Activated CD4-positive, alpha-beta memory T cell treated with anti-CD3 and anti-CD28 coated beads, Interleukin-2, amount 10 ng/mL, durations not matched to agents 7 days and 5 days (primary cell): ENCODE measurements at regions of chr2 and their contacts with region 1.

Region 1: DNA sequence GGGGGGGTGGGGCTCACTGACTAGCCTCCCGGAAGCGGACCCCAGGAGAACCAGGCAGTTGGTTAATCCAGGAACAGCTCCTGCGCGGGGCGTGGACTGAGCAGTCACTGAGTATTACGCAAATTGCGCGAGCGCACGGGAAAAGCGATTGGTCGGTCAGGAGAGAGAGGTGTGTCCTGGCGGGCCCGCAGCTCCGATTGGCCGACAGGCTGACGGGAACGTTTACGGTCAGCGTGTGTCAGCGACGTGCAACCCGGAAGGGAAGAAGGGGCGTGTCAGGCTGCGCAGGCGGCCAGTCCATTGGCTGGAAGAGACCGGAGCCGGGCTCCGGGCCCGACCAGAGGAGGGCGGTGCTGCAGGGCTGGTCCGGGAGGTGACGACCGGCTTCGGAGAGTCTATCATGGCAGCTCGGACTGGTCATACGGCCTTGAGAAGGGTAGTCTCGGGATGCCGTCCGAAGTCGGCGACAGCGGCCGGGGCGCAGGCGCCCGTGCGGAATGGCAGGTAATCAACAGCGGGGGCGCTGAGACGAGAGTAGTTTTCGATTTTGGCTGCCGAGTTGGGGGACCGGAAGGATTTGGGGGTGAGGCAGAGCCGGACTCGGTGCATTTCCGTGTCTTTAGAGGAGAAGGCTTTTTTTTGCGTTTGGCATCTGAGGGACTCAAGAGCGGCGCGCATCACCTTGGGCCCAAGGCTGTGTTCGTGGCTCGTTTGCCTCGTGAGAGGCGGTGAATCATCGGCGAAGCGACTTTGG is at the start of gene COQ10B:
- DNase-seq: peak; percentile 99
- H3K4me3 Mint-ChIP-seq: peak within 1 kb of the TSS; percentile 96
- H3K27ac Mint-ChIP-seq: peak within 1 kb of the TSS; percentile 99
- H3K4me1 Mint-ChIP-seq: peaks cover 40% of the 10 kb centered on the region
- H3K27me3 Mint-ChIP-seq: no peaks in the 10 kb centered on the region
- total RNA-seq, gene COQ10B: 22.2 to 24.4 TPM

Region 2: GRCh38 chr2:197383823-197384222 is 69.5 kb before region 1 on chr2:
- CTCF ChIA-PET with region 1: no interaction called
- POLR2A ChIA-PET with region 1: no interaction called
- DNase-seq: no peak
- H3K4me3 Mint-ChIP-seq: no peak overlapping the region
- H3K27ac Mint-ChIP-seq: no peak overlapping the region
- H3K4me1 Mint-ChIP-seq: peaks cover 23% of the 10 kb centered on the region
- H3K27me3 Mint-ChIP-seq: peaks cover 5% of the 10 kb centered on the region

Region 3: GRCh38 chr2:197434541-197435513 is 18.5 kb before region 1 on chr2 and contains the start of gene SF3B1:
- CTCF ChIA-PET with region 1: interaction called, 10 read pairs
- POLR2A ChIA-PET with region 1: interaction called, 176 read pairs
- DNase-seq: peak; percentile 99
- H3K4me3 Mint-ChIP-seq: peak within 1 kb of the TSS; percentile 84
- H3K27ac Mint-ChIP-seq: peak within 1 kb of the TSS; percentile 100
- H3K4me1 Mint-ChIP-seq: peaks cover 50% of the 10 kb centered on the region
- H3K27me3 Mint-ChIP-seq: no peaks in the 10 kb centered on the region
- total RNA-seq, gene SF3B1: 292 to 304 TPM

Region 4: DNA sequence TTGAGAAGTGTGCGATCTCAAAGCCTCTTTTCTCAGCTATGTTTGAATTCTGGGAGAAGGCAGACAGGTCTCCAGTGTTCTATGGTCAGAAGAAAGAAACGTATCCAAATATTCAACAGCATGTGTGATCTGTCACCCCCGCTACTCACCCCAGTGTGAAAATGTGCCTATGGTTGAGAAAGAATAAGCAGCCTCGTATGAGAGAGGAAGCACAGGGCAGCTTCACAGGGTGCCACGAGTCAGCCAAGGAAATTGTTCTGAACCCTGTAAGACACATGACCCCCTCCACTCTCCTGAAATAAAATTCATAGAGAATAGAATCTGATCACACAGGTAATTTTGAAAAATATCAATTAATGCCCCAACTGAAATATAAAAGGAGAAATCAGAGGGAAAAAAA is 10.5 kb before region 1 on chr2:
- CTCF ChIA-PET with region 1: interaction called, 5 read pairs
- POLR2A ChIA-PET with region 1: interaction called, 176 read pairs
- DNase-seq: no peak
- H3K4me3 Mint-ChIP-seq: no peak overlapping the region
- H3K27ac Mint-ChIP-seq: no peak overlapping the region
- H3K4me1 Mint-ChIP-seq: no peaks in the 10 kb centered on the region
- H3K27me3 Mint-ChIP-seq: peaks cover 5% of the 10 kb centered on the region

Region 5: DNA sequence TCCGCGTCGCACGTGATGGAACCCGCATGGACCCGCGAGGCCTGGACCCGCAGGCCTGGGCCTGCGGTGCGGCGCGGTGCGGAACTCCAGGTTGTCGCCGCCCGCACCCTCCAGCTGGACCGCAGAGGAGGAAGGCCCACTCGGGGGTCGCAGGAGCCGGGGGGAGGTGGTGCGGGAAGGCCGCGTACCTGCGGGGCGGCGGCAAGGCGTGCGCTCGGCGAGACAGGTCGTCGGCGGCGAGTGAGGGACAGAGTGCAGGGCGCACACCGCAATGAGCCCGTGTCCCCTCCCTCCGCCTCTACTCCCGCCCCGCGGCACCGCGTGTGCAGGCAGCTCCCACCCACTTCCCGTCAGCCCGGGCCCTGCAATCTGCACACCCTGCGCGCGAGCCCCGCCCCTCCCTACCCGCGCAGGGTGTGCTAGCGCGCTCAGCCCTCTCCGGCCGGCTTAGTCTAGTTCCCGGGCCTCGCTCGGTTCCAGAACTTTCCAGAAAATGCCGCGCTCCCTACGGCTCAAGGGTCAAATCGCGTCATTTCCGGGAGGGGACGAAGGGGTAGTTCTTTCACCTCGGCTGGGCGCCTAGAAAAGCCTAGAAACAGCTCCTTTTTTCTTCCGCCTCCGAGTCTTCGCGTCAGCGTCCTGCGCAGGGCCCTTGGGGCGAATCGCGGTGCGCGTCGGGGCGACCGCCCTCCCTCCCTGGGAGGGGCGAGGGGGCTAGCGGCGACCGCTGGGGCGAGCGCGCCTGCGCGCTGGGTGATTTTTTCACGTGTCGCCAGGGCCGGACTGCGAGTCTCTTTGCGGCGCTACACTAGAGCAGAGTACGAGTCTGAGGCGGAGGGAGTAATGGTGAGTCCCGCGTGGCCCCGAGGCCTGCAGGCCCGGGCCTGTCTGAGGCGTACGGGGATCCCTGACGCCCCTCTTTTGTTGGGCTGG is 46.5 kb after region 1 on chr2 and contains the starts of genes HSPD1 and HSPE1:
- CTCF ChIA-PET with region 1: interaction called, 9 read pairs
- POLR2A ChIA-PET with region 1: interaction called, 60 read pairs
- DNase-seq: peak; percentile 98
- H3K4me3 Mint-ChIP-seq: peak within 1 kb of the TSS; percentile 92
- H3K27ac Mint-ChIP-seq: peak within 1 kb of the TSS; percentile 97
- H3K4me1 Mint-ChIP-seq: peaks cover 60% of the 10 kb centered on the region
- H3K27me3 Mint-ChIP-seq: no peaks in the 10 kb centered on the region
- total RNA-seq, gene HSPD1: 227 to 229 TPM
- total RNA-seq, gene HSPE1: 85.9 to 92.6 TPM

Region 6: DNA sequence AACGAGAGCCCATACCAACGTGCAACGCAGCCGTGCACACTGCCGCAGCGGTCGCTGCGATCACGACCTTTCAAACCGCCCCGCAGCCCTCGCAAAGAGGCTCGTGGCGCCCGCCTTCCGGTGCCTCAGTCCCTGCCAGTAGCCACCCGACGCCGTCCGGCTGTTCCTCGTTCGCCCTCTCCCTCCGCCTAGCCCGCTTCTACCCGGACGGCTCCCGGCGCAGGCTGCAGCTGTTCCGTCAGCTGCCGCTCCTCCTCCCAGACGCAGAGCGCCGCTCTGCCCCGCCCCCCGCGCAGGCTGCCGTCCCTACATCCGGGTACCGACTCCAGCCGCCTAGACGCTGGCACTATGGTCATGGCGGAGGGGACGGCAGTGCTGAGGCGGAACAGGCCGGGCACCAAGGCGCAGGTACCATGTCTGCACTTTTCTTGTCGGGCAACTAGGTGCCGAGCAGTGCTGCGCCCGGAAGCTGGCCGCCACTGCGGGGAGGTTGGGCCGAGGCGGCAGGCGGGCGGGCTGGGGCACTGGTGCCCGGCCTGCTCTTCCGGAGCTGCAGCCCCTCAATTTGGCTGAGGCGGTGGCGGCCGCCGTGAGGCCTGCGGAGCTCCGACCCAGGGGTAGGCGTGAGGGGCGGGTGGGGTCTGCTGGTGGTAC is 62.5 kb after region 1 on chr2 and contains the start of gene MOB4:
- CTCF ChIA-PET with region 1: interaction called, 3 read pairs
- POLR2A ChIA-PET with region 1: interaction called, 34 read pairs
- DNase-seq: peak; percentile 95
- H3K4me3 Mint-ChIP-seq: peak within 1 kb of the TSS; percentile 96
- H3K27ac Mint-ChIP-seq: peak within 1 kb of the TSS; percentile 81
- H3K4me1 Mint-ChIP-seq: peaks cover 33% of the 10 kb centered on the region
- H3K27me3 Mint-ChIP-seq: no peaks in the 10 kb centered on the region
- total RNA-seq, gene MOB4: 23.5 to 24.8 TPM

Region 7: GRCh38 chr2:197705121-197705911 is 252.0 kb after region 1 on chr2 and contains the start of gene MARS2:
- CTCF ChIA-PET with region 1: interaction called, 3 read pairs
- POLR2A ChIA-PET with region 1: interaction called, 18 read pairs
- DNase-seq: peak; percentile 94
- H3K4me3 Mint-ChIP-seq: peak within 1 kb of the TSS; percentile 88
- H3K27ac Mint-ChIP-seq: peak within 1 kb of the TSS; percentile 82
- H3K4me1 Mint-ChIP-seq: peaks cover 46% of the 10 kb centered on the region
- H3K27me3 Mint-ChIP-seq: no peaks in the 10 kb centered on the region
- total RNA-seq, gene MARS2: 9.6 to 9.9 TPM